ENCODE measurements at regions of chr20 and their contacts with region 1.

Region 1: DNA sequence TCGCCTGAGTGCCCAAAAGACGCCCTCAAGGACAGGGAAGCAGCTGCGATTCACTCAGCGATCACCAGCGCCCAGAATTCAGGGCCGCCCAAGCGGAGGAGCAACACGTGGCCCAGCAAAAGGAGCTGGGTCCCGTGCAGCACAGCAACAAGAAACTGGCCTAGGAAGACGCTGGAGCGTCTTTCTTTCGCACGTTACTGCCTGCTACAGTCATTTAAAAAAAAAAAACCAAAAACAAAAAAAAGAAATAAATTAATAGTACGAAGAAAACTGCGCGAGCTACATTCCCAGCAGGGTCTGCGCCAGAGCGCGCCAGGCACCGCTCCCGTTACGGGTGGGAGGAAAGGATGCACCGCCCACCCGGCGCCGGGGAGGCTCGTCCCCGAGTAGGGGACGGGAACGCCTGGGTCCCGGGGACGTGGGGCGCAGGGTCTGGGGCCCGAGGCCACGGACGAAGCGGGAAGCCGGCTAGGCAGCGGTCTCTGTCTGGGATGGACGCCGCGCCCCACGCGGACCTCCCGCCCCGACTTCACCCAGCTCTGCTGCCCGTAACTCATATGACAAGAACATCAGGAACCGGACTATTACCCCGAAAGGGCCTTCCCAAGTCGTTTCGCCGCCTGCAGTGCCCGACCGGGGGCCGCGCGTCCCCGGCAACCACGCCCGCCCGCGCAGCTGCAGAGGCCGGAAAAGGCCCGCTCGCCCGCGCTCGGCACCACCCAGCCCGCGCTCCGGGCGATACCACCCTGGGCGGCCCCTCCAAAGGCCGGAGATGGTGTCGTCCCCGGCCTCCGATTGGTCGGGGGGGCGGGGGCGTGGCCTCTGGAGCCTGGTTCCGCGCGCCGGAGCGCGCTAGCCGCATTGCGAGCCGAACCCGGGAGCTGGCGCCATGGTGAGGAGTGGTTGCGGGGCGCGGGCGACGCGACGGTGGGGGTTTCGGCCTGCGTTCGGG is at the start of gene NOP56:
- DNase-seq: peak; percentile 91
- H3K4me3 Mint-ChIP-seq: peak within 1 kb of the TSS; percentile 81
- H3K27ac Mint-ChIP-seq: peak within 1 kb of the TSS; percentile 92
- H3K4me1 Mint-ChIP-seq: peaks cover 58% of the 10 kb centered on the region
- H3K27me3 Mint-ChIP-seq: no peaks in the 10 kb centered on the region
- total RNA-seq, gene NOP56: 382 to 387 TPM

Region 2: DNA sequence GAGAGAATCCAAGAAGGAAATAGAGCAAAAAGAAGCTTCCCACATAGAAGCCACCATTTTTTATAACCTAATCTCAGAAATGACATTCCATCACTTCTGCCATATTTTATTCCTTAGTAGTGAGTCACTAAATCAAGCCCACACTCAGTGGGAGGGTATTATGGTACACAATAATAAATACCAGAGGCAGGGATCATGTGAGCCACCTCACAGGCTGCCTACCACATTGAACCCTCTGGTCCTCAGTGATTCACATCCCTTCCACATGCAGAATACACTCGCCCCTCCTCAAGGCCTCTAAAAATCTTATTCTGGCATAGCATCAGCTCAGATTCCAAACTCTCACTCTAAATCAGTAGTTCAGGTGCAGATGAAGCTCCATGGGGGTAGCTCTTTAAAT is 66.2 kb before region 1 on chr20:
- CTCF ChIA-PET with region 1: no interaction called
- POLR2A ChIA-PET with region 1: no interaction called
- DNase-seq: no peak
- H3K4me3 Mint-ChIP-seq: no peak overlapping the region
- H3K27ac Mint-ChIP-seq: no peak overlapping the region
- H3K4me1 Mint-ChIP-seq: no peaks in the 10 kb centered on the region
- H3K27me3 Mint-ChIP-seq: peaks cover 29% of the 10 kb centered on the region

Region 3: GRCh38 chr20:2626853-2627541 is 25.1 kb before region 1 on chr20:
- CTCF ChIA-PET with region 1: no interaction called
- POLR2A ChIA-PET with region 1: no interaction called
- DNase-seq: no peak
- H3K4me3 Mint-ChIP-seq: no peak overlapping the region
- H3K27ac Mint-ChIP-seq: no peak overlapping the region
- H3K4me1 Mint-ChIP-seq: no peaks in the 10 kb centered on the region
- H3K27me3 Mint-ChIP-seq: peaks cover 20% of the 10 kb centered on the region

Region 4: GRCh38 chr20:2663887-2664719 is 12.1 kb after region 1 on chr20 and contains the start of gene IDH3B:
- CTCF ChIA-PET with region 1: interaction called, 22 read pairs
- POLR2A ChIA-PET with region 1: interaction called, 7 read pairs
- DNase-seq: peak; percentile 95
- H3K4me3 Mint-ChIP-seq: peak within 1 kb of the TSS; percentile 83
- H3K27ac Mint-ChIP-seq: peak within 1 kb of the TSS; percentile 97
- H3K4me1 Mint-ChIP-seq: peaks cover 31% of the 10 kb centered on the region
- H3K27me3 Mint-ChIP-seq: peaks cover 6% of the 10 kb centered on the region
- total RNA-seq, gene IDH3B: 100 to 103 TPM

Region 5: DNA sequence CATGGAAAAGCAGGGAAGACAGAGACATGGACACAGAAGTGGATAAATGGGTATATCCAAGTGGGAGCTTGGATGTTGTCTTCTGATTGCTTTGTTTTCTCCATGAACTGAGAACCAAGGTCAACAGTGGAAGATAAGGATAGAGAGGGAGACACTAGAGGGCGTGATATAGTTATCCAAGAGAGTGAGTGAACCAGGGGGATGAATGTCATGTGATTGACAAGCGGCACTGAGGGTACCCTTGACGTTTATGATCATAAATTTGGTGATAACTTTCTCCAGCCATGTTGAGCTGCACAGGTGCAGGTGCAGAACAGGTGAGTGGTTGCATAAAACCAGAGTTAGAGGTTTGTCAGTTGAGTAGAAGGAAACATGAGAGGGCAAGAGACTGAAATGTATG is 61.2 kb after region 1 on chr20:
- CTCF ChIA-PET with region 1: no interaction called
- POLR2A ChIA-PET with region 1: no interaction called
- DNase-seq: no peak
- H3K4me3 Mint-ChIP-seq: no peak overlapping the region
- H3K27ac Mint-ChIP-seq: no peak overlapping the region
- H3K4me1 Mint-ChIP-seq: no peaks in the 10 kb centered on the region
- H3K27me3 Mint-ChIP-seq: peaks cover 2% of the 10 kb centered on the region